Naive thymus-derived CD4-positive, alpha-beta T cell (primary cell): ENCODE measurements at regions of chr4 and their contacts with region 1.

Region 1: GRCh38 chr4:66197451-66197850 is 527.2 kb upstream of the EPHA5 start:
- DNase-seq: no peak
- ATAC-seq: no peak
- H3K4me3 ChIP-seq: no peak overlapping the region
- H3K4me3 Mint-ChIP-seq: no peak overlapping the region
- H3K27ac ChIP-seq: no peak overlapping the region
- H3K27ac Mint-ChIP-seq: no peak overlapping the region
- H3K4me1 ChIP-seq: no peaks in the 10 kb centered on the region
- H3K4me1 Mint-ChIP-seq: no peaks in the 10 kb centered on the region
- H3K27me3 ChIP-seq: no peaks in the 10 kb centered on the region
- H3K27me3 Mint-ChIP-seq: no peaks in the 10 kb centered on the region

Region 2: DNA sequence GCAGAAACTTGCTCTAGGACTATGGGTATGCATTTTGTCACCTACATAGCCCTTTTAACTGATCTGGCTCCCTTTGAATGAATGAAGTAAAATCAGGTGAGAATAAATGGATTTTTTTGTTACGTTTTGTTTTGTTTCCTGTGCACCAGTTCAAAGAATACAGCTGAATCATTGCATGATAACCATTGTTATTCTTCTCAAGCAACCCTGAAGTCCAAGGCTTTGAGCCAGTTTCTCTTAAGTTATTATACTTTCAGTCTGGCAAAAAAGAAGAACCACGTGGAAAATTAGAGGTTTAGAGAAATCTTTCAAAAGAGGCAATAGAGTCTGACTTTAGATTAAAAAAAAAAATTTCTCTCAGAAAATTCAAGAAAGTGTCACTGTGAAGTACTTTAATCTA is 1389.6 kb before region 1 on chr4:
- CTCF ChIA-PET with region 1: no interaction called
- POLR2A ChIA-PET with region 1: no interaction called
- intact Hi-C with region 1: loop called in 1 of 2 experiments (anchors 5 kb)
- DNase-seq: no peak
- ATAC-seq: no peak
- H3K4me3 ChIP-seq: no peak overlapping the region
- H3K4me3 Mint-ChIP-seq: no peak overlapping the region
- H3K27ac ChIP-seq: no peak overlapping the region
- H3K27ac Mint-ChIP-seq: no peak overlapping the region
- H3K4me1 ChIP-seq: no peaks in the 10 kb centered on the region
- H3K4me1 Mint-ChIP-seq: no peaks in the 10 kb centered on the region
- H3K27me3 ChIP-seq: no peaks in the 10 kb centered on the region
- H3K27me3 Mint-ChIP-seq: no peaks in the 10 kb centered on the region

Region 3: GRCh38 chr4:66252291-66252690 is 54.8 kb after region 1 on chr4:
- CTCF ChIA-PET with region 1: no interaction called
- POLR2A ChIA-PET with region 1: no interaction called
- intact Hi-C with region 1: no loop called
- DNase-seq: no peak
- ATAC-seq: no peak
- H3K4me3 ChIP-seq: no peak overlapping the region
- H3K4me3 Mint-ChIP-seq: no peak overlapping the region
- H3K27ac ChIP-seq: no peak overlapping the region
- H3K27ac Mint-ChIP-seq: no peak overlapping the region
- H3K4me1 ChIP-seq: no peaks in the 10 kb centered on the region
- H3K4me1 Mint-ChIP-seq: no peaks in the 10 kb centered on the region
- H3K27me3 ChIP-seq: no peaks in the 10 kb centered on the region
- H3K27me3 Mint-ChIP-seq: no peaks in the 10 kb centered on the region